Aorta (tissue), 5 donors: ENCODE measurements at regions of chr1 and their contacts with region 1.

Region 1: DNA sequence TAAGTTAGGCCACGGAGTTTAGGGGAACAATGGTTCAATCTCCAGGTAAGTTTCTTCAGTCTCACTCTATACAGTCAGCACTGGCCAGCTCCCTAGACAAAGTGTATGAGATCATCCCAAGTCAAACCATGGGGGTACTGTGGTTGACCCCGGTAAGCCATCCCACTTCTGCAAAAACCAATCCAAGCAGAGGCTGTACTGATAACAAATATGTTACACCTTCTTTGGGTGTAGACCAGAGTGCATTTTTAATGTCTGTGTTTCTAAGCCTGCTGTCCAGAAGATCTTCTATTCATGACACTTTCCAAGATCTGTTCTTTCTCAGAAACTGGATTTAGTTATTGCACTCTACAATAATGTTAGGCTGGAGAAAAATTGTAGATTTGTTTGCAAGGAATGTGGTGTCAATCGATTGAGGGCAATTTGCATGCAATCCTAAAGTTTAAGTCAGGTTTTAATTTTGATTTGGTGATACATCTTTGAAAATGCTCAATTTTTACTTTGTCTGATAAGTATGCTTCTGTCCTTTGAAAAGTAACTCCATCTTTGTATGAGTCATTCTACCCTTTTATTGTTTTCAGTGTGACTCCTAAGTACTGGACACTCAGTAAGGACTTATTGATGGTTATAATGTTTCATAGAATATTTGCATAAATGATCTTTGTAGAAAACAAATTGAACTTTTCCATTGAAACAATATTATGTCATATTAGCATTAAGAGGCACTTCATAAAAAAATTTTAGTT is 152.4 kb downstream of the HLX start:
- DNase-seq: no peak
- ATAC-seq: no peak
- H3K4me3 ChIP-seq: no peak overlapping the region
- H3K27ac ChIP-seq: no peak overlapping the region
- H3K4me1 ChIP-seq: no peaks in the 10 kb centered on the region
- H3K27me3 ChIP-seq: no peaks in the 10 kb centered on the region

Region 2: DNA sequence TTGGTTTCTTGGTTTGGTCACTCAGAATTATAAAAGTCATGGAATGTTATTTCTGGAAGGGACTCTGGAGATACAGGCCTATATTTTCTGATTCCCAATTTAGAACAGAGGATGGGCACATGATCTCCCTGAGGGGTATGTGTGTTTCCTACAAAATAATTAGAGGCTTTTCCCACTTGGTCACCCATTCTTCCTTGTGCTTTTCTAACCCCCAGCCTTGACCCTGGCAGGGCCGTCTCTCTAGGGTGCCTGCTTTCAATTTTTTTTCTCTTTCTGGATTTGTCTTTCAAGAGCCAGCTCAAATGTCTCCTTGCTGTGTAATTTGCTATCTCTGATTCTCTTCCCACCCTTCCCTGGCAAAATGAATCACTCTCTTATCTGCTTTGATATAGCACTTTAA is 20.5 kb before region 1 on chr1:
- intact Hi-C with region 1: loop called in 1 of 2 experiments (anchors 2 kb)
- DNase-seq: no peak
- ATAC-seq: peak; percentile 51
- H3K4me3 ChIP-seq: no peak overlapping the region
- H3K27ac ChIP-seq: no peak overlapping the region
- H3K4me1 ChIP-seq: peaks cover 4 to 6% of the 10 kb centered on the region in 2 donors
- H3K27me3 ChIP-seq: no peaks in the 10 kb centered on the region